Activated B cell treated with CpG ODN at 0.5 μM for 24 hours (primary cell): ENCODE measurements at regions of chr17 and their contacts with region 1.

Region 1: DNA sequence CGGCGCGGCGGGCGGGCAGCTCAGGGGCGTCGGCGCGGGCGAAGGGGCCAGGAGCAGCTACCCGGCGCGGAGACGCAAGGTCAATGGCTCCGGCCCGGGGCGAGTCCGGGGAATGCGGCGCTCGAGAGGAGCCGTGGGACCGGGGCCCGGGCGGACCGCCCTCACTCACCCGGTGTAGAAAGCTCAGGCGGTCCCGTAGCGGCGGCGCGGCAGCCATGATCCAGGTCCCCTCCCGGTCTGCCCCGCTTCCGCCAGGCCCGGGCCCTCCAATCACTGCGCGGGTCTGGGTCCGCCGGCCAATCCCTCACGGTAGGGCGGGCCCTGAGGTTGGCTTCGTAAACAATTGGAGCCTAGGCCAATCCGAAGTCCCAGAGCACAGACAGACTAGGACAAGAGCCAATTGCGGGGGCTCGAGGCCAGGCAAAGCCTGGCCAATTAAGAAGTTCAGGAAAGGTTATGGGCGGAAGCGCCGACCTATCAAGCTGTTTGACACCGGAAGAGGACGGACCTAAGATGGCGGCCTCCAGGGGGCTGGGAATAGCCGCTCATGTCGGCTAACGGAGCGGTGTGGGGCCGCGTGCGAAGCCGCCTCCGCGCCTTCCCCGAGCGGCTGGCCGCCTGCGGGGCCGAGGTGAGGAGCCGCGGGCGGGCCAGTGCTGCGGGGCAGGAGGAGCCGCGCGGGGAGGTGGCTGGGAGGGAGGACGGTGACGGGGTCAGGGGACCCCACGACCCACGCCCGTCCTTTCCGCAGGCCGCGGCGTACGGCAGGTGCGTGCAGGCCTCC is at the starts of genes NDUFAF8 and TEPSIN:
- DNase-seq: peak; percentile 86
- ATAC-seq: peak; percentile 95
- H3K4me3 Mint-ChIP-seq: peak within 1 kb of the TSS; percentile 93
- H3K27ac Mint-ChIP-seq: peak within 1 kb of the TSS; percentile 88
- H3K4me1 Mint-ChIP-seq: peaks cover 47% of the 10 kb centered on the region
- H3K27me3 Mint-ChIP-seq: no peaks in the 10 kb centered on the region
- CTCF ChIP-seq: no peak
- total RNA-seq, gene NDUFAF8: 52.8 and 55.8 TPM in 2 replicates
- total RNA-seq, gene TEPSIN: 82.9 and 102 TPM in 2 replicates

Region 2: GRCh38 chr17:81018044-81018802 is 220.8 kb before region 1 on chr17:
- CTCF ChIA-PET with region 1: no interaction called
- POLR2A ChIA-PET with region 1: interaction called, 5 read pairs
- intact Hi-C with region 1: loop called (anchors 1 kb)
- DNase-seq: no peak
- ATAC-seq: peak; percentile 76
- H3K4me3 Mint-ChIP-seq: peak overlapping the region; percentile 82
- H3K27ac Mint-ChIP-seq: peak overlapping the region; percentile 64
- H3K4me1 Mint-ChIP-seq: peaks cover 14% of the 10 kb centered on the region
- H3K27me3 Mint-ChIP-seq: no peaks in the 10 kb centered on the region
- CTCF ChIP-seq: no peak

Region 3: GRCh38 chr17:81222906-81223761 is 15.9 kb before region 1 on chr17 and contains the start of gene CEP131:
- CTCF ChIA-PET with region 1: interaction called, 4 read pairs
- POLR2A ChIA-PET with region 1: interaction called, 79 read pairs
- intact Hi-C with region 1: loop called (anchors 1 kb)
- DNase-seq: peak; percentile 100
- ATAC-seq: peak; percentile 89
- H3K4me3 Mint-ChIP-seq: peak within 1 kb of the TSS; percentile 85
- H3K27ac Mint-ChIP-seq: peak within 1 kb of the TSS; percentile 91
- H3K4me1 Mint-ChIP-seq: peaks cover 33% of the 10 kb centered on the region
- H3K27me3 Mint-ChIP-seq: no peaks in the 10 kb centered on the region
- CTCF ChIP-seq: no peak
- total RNA-seq, gene CEP131: 14.2 and 15.9 TPM in 2 replicates

Region 4: GRCh38 chr17:81346090-81346907 is 107.3 kb after region 1 on chr17:
- CTCF ChIA-PET with region 1: no interaction called
- POLR2A ChIA-PET with region 1: no interaction called
- intact Hi-C with region 1: no loop called
- DNase-seq: peak; percentile 87
- ATAC-seq: peak; percentile 96
- H3K4me3 Mint-ChIP-seq: peak overlapping the region; percentile 74
- H3K27ac Mint-ChIP-seq: no peak overlapping the region
- H3K4me1 Mint-ChIP-seq: peaks cover 20% of the 10 kb centered on the region
- H3K27me3 Mint-ChIP-seq: peaks cover 24% of the 10 kb centered on the region
- CTCF ChIP-seq: no peak

Region 5: DNA sequence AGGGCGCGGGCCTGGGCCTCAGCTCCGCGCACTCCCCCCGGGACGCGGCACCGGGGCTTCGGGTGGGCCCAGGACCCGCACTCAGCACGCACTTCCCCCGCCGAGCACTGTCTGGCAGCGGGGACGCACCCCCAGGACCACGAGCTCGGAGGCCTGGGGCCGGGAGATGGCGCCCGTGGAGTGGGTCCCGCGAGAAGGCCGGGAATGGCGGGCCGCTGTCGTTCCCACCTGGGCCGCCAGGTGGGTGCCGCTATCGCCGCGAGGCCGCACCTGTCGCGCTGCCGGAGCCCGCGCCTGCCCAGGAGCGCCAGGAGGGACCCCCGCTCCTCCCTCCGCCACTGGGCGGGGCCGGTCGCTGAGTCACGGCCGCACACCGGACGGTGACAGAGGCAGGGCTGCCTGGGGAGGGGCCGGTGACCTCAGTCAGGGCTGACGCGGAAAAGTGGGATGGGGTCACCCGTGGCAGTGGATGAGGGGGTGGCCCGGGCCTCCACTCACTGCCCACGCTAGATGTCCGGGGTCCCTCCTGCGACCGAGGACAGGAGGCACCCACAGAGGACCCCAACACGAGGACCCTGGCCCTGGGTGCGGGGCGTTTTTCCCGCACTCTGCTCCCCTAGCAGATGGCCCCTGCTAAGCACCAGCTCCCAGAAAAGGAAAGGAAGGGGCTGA is 280.4 kb after region 1 on chr17:
- CTCF ChIA-PET with region 1: no interaction called
- POLR2A ChIA-PET with region 1: interaction called, 18 read pairs
- intact Hi-C with region 1: no loop called
- DNase-seq: peak; percentile 67
- ATAC-seq: peak; percentile 11
- H3K4me3 Mint-ChIP-seq: peak overlapping the region; percentile 93
- H3K27ac Mint-ChIP-seq: peak overlapping the region; percentile 68
- H3K4me1 Mint-ChIP-seq: peaks cover 45% of the 10 kb centered on the region
- H3K27me3 Mint-ChIP-seq: no peaks in the 10 kb centered on the region
- CTCF ChIP-seq: no peak